Heart left ventricle (tissue), 16 donors: ENCODE measurements at regions of chr5 and their contacts with region 1.

Region 1: GRCh38 chr5:148443998-148444397 is 60.2 kb downstream of the FBXO38 start:
- DNase-seq: peak in 3 of 5 donors; percentile 28 to 65 (median 45)
- ATAC-seq: peak; percentile 68 to 83 (median 82)
- H3K4me3 ChIP-seq: no peak overlapping the region
- H3K27ac ChIP-seq: peak overlapping the region in 2 of 12 donors; percentile 6 to 24
- H3K4me1 ChIP-seq: peaks cover 0 to 28% (median 5%) of the 10 kb centered on the region in 12 donors
- H3K27me3 ChIP-seq: no peaks in the 10 kb centered on the region
- CTCF ChIP-seq: peak; percentile 63 to 86 (median 77)
- POLR2A ChIP-seq: no peak

Region 2: DNA sequence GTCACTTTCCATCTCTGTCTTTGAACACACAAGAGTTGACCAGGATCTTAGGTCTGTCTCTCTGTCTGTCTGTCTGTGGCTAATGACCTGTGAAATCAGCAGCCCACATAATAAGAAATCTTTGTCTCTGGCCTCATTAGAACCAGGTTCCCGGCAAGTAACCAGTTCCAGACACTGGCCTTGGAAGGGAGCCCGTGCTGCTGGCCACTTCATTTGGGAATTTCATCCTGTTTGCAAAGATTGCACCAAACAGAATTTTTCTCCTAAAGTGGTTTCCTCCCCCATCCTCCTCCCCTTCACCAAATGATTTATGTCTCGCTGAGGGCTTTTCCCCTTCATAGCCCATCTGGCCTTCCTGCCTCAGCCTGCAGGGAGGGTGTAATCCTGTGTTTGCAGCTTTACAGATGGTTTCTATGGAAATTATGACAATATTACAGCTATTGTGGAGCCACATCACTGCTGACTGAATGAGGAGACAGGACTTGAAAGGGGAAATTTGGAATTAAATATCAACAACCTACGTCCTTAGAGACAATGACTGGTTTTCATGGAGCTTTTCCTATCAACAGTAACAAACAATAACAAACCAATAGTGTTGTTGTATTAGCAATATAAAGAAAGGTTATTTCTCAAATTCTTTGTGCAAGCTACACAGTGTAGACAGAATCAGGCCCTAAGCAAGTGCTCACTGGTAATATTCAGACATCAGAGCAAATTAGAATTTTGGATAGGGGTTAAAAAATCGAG is 959.9 kb before region 1 on chr5:
- intact Hi-C with region 1: no loop called
- DNase-seq: peak; percentile 64 to 80 (median 73)
- ATAC-seq: peak; percentile 70 to 92 (median 83)
- H3K4me3 ChIP-seq: peak overlapping the region in 1 of 12 donors; percentile 11
- H3K27ac ChIP-seq: peak overlapping the region; percentile 33 to 87 (median 75)
- H3K4me1 ChIP-seq: peaks cover 0 to 79% (median 43%) of the 10 kb centered on the region in 12 donors
- H3K27me3 ChIP-seq: no peaks in the 10 kb centered on the region
- CTCF ChIP-seq: no peak
- POLR2A ChIP-seq: no peak

Region 3: DNA sequence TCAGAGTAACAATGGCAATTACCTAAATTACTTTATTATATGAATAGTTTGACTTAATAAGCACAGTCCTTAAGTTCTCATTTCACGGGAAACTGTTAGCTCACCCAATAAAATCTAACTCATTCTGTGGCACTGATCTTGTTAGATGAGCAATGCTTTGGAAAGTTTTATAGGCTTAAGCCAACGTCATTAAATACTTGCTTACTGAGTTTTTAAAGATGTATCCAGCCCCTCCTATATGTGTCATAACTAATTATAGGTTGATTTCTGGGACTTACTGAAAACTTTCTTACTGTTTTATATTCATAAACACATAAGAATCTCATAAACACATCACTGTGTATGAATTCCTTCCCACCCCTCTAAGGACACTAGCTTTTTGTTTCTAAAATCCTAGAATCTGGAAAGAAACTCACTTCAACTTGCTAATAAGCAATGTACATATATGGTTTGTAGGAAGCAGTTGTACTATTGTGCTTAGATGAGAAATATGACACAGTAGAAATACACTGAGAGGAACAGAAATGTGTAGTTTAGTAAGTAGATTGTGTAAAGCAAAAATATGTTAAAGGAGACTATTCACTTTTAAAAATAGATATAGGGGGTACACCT is 219.8 kb before region 1 on chr5:
- intact Hi-C with region 1: no loop called
- DNase-seq: no peak
- ATAC-seq: no peak
- H3K4me3 ChIP-seq: no peak overlapping the region
- H3K27ac ChIP-seq: no peak overlapping the region
- H3K4me1 ChIP-seq: no peaks in the 10 kb centered on the region
- H3K27me3 ChIP-seq: peaks cover 0 to 6% (median 0%) of the 10 kb centered on the region in 9 donors
- CTCF ChIP-seq: no peak
- POLR2A ChIP-seq: no peak

Region 4: GRCh38 chr5:148290271-148291195 is 153.5 kb before region 1 on chr5:
- intact Hi-C with region 1: loop called in 2 of 10 experiments (anchors 2 to 5 kb)
- DNase-seq: no peak
- ATAC-seq: peak; percentile 55 to 65 (median 61)
- H3K4me3 ChIP-seq: no peak overlapping the region
- H3K27ac ChIP-seq: no peak overlapping the region
- H3K4me1 ChIP-seq: peaks cover 0 to 3% (median 0%) of the 10 kb centered on the region in 12 donors
- H3K27me3 ChIP-seq: no peaks in the 10 kb centered on the region
- CTCF ChIP-seq: peak; percentile 17 to 60 (median 45)
- POLR2A ChIP-seq: no peak

Region 5: GRCh38 chr5:148482691-148483462 is 38.9 kb after region 1 on chr5:
- intact Hi-C with region 1: loop called in 2 of 10 experiments (anchors 5 kb)
- DNase-seq: peak; percentile 29 to 75 (median 46)
- ATAC-seq: peak in 3 of 4 donors; percentile 36 to 54 (median 36)
- H3K4me3 ChIP-seq: peak overlapping the region in 2 of 12 donors; percentile 3 to 12
- H3K27ac ChIP-seq: peak overlapping the region in 1 of 12 donors; percentile 14
- H3K4me1 ChIP-seq: peaks cover 0 to 9% (median 0%) of the 10 kb centered on the region in 12 donors
- H3K27me3 ChIP-seq: peaks cover 0 to 3% (median 0%) of the 10 kb centered on the region in 9 donors
- CTCF ChIP-seq: peak; percentile 37 to 70 (median 56)
- POLR2A ChIP-seq: no peak

Region 6: GRCh38 chr5:149035372-149035790 is 591.4 kb after region 1 on chr5:
- intact Hi-C with region 1: loop called in 3 of 10 experiments (anchors 5 to 10 kb)
- DNase-seq: peak; percentile 71 to 88 (median 77)
- ATAC-seq: peak; percentile 82 to 94 (median 91)
- H3K4me3 ChIP-seq: no peak overlapping the region
- H3K27ac ChIP-seq: no peak overlapping the region
- H3K4me1 ChIP-seq: peaks cover 0 to 39% (median 8%) of the 10 kb centered on the region in 12 donors
- H3K27me3 ChIP-seq: no peaks in the 10 kb centered on the region
- CTCF ChIP-seq: peak; percentile 69 to 91 (median 86)
- POLR2A ChIP-seq: no peak